IMR-90 (cell line): ENCODE measurements at regions of chr2 and their contacts with region 1.

Region 1: DNA sequence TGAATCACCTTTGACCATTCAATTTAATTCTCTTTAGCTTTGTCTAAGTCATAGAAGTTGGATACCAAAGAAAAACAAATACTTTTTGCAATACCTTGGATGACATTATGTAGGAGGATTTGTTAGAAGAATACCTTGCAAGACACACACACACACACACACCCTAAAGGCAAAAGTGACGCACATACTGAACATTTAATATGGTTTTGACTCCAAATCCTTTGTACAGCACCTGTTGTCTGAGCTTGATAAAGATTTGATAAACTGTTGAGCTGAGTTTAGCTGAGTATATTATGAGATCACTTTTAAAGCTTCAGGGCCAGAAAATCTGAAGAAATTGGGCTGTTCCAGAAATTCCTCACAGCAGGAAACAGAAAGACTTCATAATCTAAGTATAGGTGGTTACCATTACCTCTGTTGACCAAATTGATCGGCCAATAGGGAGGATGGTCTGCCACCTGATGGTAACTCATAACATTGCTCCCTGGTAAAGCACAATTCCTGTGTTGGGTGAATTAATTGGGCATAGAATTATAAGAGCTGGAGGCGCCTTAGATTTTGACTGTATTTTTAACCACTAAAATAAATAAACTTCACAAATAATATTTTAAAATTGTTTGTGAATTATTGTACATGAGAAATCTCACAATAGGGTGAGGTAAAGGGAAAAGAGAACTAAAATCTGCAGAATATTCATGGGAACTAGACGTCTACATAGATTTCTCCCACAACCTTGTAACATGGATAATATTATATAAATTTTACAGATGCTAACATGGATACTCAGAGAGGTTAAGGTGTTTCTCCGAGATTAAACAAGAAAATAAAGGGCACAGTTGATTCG is 21.9 kb upstream of the RPIA start:
- DNase-seq: peak; percentile 52
- ATAC-seq: peak; percentile 78
- H3K4me3 ChIP-seq: no peak overlapping the region
- H3K27ac ChIP-seq: no peak overlapping the region
- H3K4me1 ChIP-seq: no peaks in the 10 kb centered on the region
- H3K27me3 ChIP-seq: peaks cover 10% of the 10 kb centered on the region
- CTCF ChIP-seq: peak; percentile 67
- POLR2A ChIP-seq: no peak
- RAD21 ChIP-seq: peak; percentile 77

Region 2: GRCh38 chr2:88187038-88187676 is 482.4 kb before region 1 on chr2:
- CTCF ChIA-PET with region 1: no interaction called
- POLR2A ChIA-PET with region 1: no interaction called
- dilution Hi-C with region 1: no loop called
- in situ Hi-C with region 1: loop called (anchors 25 kb)
- intact Hi-C with region 1: loop called (anchors 1 kb)
- DNase-seq: peak; percentile 21
- ATAC-seq: 0 out of 2 replicates have a peak, but pooled peaks have one; percentile 67
- H3K4me3 ChIP-seq: no peak overlapping the region
- H3K27ac ChIP-seq: no peak overlapping the region
- H3K4me1 ChIP-seq: no peaks in the 10 kb centered on the region
- H3K27me3 ChIP-seq: no peaks in the 10 kb centered on the region
- CTCF ChIP-seq: peak; percentile 55
- POLR2A ChIP-seq: no peak
- RAD21 ChIP-seq: peak; percentile 39

Region 3: GRCh38 chr2:88590998-88591613 is 78.5 kb before region 1 on chr2:
- CTCF ChIA-PET with region 1: interaction called, 17 read pairs
- POLR2A ChIA-PET with region 1: no interaction called
- dilution Hi-C with region 1: no loop called
- in situ Hi-C with region 1: loop called (anchors 5 kb)
- intact Hi-C with region 1: loop called (anchors 1 kb)
- DNase-seq: peak; percentile 72
- ATAC-seq: peak; percentile 93
- H3K4me3 ChIP-seq: no peak overlapping the region
- H3K27ac ChIP-seq: no peak overlapping the region
- H3K4me1 ChIP-seq: no peaks in the 10 kb centered on the region
- H3K27me3 ChIP-seq: no peaks in the 10 kb centered on the region
- CTCF ChIP-seq: peak; percentile 84
- POLR2A ChIP-seq: no peak
- RAD21 ChIP-seq: peak; percentile 86

Region 4: GRCh38 chr2:88828397-88829137 is 159.0 kb after region 1 on chr2:
- CTCF ChIA-PET with region 1: no interaction called
- POLR2A ChIA-PET with region 1: no interaction called
- dilution Hi-C with region 1: no loop called
- in situ Hi-C with region 1: no loop called
- intact Hi-C with region 1: no loop called
- DNase-seq: peak; percentile 29
- ATAC-seq: no peak; the same call in 1 of the 2 replicates
- H3K4me3 ChIP-seq: no peak overlapping the region
- H3K27ac ChIP-seq: no peak overlapping the region
- H3K4me1 ChIP-seq: no peaks in the 10 kb centered on the region
- H3K27me3 ChIP-seq: peaks cover 1% of the 10 kb centered on the region; the same call in 1 of the 2 replicates
- CTCF ChIP-seq: no peak
- POLR2A ChIP-seq: no peak
- RAD21 ChIP-seq: no peak